GM13976 (cell line): ENCODE measurements at regions of chr13 and their contacts with region 1.

Region 1: DNA sequence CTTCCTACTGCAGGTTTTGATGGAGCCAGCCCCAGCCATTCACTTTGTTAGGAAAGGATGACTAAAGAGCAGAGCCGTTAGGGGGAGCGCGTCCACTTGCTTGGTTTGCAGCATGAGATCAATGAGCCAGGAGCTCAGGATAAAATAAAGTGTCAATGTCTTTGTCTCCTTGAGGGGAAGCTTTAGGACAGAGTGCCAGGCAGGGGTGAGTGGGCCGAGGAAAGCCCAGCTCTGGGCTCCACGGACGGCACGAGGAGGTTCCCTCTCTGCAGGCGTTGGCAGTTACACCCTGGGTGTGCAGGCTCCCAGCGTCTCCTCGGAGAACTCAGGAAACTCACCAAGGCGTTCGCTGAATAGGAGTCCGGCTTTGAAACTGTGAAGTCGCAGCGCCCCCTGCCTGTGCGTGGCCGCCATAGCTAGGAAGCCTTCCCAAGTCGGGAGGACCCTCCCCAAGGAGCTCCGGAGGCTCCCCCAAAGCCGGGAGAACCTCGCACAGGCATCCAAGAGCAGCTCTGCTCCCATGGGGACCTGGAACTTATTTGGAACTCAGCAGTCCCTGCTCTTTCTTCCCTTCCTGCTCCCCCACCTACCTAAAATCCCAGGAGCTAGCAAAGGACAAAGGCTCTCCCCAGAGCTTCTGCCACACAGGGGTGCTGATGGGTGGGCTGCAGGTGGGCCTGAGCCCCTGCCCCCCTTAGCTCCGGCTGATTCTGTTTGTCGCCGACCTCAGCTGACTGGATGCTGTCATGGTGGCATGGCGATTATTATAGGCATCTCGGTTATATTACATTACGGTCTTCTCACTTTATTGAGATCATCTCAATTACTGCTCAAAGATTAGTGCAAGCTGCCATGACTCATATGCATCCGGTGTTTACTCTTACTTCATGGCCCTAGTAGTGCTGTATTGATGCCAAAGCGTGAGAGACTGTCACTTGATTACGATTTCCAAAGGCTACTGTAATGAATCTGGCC is 34.4 kb downstream of the GSX1 start:
- DNase-seq: peak; percentile 86
- CTCF ChIP-seq: peak; percentile 93

Region 2: GRCh38 chr13:27374650-27375049 is 452.0 kb before region 1 on chr13:
- in situ Hi-C with region 1: loop called (anchors 10 kb)
- DNase-seq: peak; percentile 75
- CTCF ChIP-seq: peak; percentile 58

Region 3: GRCh38 chr13:27977476-27978300 is 151.0 kb after region 1 on chr13:
- in situ Hi-C with region 1: loop called (anchors 5 kb)
- DNase-seq: peak; percentile 26
- CTCF ChIP-seq: no peak